ENCODE measurements at regions of chr14 and their contacts with region 1.

Region 1: GRCh38 chr14:81927070-81927469 is 393.4 kb upstream of the SEL1L start:
- DNase-seq: no peak

Region 2: DNA sequence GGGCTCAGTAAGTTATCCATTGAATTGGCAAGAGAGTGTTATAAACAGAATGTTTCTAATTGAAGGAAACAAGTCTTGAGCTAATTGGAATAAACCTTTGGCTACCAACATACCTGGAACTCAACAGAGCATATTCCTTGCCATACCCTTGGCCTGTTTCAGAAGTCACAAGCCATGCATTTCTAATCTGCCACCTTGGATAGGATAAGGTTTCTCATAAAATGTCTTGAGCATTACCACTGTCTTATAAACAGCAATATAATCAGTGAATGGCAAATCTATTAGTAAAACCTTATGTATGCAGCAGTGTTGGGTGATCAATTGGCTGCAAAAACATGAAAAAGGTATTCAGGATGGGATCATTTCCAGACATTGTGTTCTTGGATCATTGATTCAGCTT is 371.7 kb after region 1 on chr14:
- intact Hi-C with region 1: no loop called
- DNase-seq: no peak

Region 3: GRCh38 chr14:82915381-82915780 is 988.3 kb after region 1 on chr14:
- intact Hi-C with region 1: loop called in 1 of 2 experiments (anchors 5 kb)
- DNase-seq: no peak

Measured in posterior vena cava (tissue), 2 donors.